Breast epithelium (tissue), 4 donors: ENCODE measurements at regions of chr10 and their contacts with region 1.

Region 1: DNA sequence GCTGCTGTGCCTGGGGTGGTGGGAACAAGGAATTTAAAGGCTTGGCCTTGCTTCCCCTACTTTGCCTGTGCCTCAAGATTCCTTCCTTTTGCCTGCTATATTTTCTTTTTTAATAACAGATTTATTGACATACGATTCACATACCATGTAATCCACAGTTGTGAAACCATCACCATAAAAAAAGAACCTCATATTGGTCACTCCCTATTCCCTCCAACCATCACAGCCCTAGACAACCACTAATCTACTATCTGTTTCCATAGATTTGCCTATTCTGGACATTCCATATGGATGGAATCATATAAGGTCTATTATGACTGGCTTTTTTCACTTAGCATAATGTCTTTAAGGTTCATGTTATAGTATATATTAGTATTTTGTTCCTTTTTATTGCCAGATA is 59.3 kb upstream of the TRIM8 start:
- DNase-seq: no peak
- H3K4me3 ChIP-seq: no peak overlapping the region
- H3K27ac ChIP-seq: no peak overlapping the region
- H3K4me1 ChIP-seq: no peaks in the 10 kb centered on the region
- H3K27me3 ChIP-seq: no peaks in the 10 kb centered on the region
- CTCF ChIP-seq: no peak
- POLR2A ChIP-seq: no peak

Region 2: GRCh38 chr10:102503281-102504220 is 81.5 kb before region 1 on chr10 and contains the start of gene SUFU:
- intact Hi-C with region 1: loop called (anchors 1 kb)
- DNase-seq: peak; percentile 96 to 98
- H3K4me3 ChIP-seq: peak within 1 kb of the TSS; percentile 98
- H3K27ac ChIP-seq: peak within 1 kb of the TSS; percentile 82 to 90
- H3K4me1 ChIP-seq: peaks cover 3 to 18% of the 10 kb centered on the region in 2 donors
- H3K27me3 ChIP-seq: no peaks in the 10 kb centered on the region
- CTCF ChIP-seq: peak; percentile 85 to 88 (median 87)
- POLR2A ChIP-seq: no peak
- total RNA-seq, gene SUFU: 6.2 to 9.1 (median 8.6) TPM

Region 3: DNA sequence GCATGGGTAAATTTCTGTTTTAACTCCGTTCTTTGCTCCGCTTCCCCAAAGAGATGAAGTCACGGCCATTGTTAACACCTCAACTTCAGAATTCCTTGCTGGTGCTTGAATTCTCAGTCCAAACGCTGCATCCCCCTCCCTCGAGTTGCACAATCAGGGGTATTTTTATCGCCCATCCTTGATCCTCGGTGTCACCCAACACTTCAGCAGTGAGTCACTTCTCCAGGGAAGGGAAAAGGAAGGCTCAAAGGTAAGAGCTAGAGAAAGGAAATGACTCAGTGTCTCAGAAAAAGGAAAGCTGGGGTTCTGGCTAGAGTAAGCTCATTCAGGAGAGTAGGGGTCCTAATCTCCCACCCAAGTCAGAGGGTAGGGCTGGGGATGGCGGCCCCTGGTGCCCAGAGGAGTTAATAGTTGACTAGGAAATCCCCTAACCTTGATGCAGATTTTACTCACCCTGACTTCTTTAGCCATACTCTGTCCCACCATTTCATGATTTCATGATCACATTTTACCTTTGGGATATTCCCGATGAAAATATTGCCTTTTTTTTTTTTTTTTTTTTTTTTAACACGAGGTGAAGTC is 19.4 kb after region 1 on chr10:
- intact Hi-C with region 1: no loop called
- DNase-seq: no peak
- H3K4me3 ChIP-seq: no peak overlapping the region
- H3K27ac ChIP-seq: peak overlapping the region in 1 of 2 donors; percentile 93
- H3K4me1 ChIP-seq: peaks cover 0 to 4% of the 10 kb centered on the region in 2 donors
- H3K27me3 ChIP-seq: no peaks in the 10 kb centered on the region
- CTCF ChIP-seq: no peak
- POLR2A ChIP-seq: no peak